ENCODE measurements at regions of chr12 and their contacts with region 1.

Region 1: DNA sequence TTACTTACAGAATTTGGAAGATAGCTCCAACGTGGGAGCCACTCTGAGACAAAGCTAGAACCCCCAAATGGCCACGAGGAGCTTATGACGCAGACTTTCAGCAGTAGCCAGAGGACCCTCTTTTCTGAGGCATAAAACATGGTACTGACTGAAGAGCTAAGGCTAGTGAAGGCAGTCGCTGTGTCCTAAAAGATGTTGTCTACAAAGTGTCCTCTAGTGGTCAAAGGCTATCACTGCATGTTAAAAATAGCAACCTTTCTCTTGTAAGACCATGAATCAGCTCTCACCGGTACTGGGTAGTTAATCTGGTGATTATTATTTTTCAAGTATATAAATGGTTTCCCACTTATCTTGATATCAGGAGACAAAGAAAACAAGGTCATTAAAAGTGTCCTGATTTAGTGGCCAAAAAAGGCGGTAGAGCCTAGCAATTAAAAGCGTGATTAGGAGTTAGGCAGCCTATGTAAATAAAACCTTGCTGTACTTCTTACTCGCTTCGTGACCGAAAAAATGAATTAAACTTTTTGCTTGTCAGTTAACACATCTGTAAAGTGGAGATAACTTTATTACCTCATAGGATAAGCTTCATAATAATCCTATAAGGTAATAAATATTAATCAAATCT is 47.0 kb upstream of the LGR5 start:
- DNase-seq: no peak
- H3K4me3 ChIP-seq: no peak overlapping the region
- H3K27ac ChIP-seq: no peak overlapping the region
- H3K4me1 ChIP-seq: peaks cover 0 to 6% (median 0%) of the 10 kb centered on the region in 4 donors
- H3K27me3 ChIP-seq: no peaks in the 10 kb centered on the region
- CTCF ChIP-seq: peak; percentile 71 to 73

Region 2: DNA sequence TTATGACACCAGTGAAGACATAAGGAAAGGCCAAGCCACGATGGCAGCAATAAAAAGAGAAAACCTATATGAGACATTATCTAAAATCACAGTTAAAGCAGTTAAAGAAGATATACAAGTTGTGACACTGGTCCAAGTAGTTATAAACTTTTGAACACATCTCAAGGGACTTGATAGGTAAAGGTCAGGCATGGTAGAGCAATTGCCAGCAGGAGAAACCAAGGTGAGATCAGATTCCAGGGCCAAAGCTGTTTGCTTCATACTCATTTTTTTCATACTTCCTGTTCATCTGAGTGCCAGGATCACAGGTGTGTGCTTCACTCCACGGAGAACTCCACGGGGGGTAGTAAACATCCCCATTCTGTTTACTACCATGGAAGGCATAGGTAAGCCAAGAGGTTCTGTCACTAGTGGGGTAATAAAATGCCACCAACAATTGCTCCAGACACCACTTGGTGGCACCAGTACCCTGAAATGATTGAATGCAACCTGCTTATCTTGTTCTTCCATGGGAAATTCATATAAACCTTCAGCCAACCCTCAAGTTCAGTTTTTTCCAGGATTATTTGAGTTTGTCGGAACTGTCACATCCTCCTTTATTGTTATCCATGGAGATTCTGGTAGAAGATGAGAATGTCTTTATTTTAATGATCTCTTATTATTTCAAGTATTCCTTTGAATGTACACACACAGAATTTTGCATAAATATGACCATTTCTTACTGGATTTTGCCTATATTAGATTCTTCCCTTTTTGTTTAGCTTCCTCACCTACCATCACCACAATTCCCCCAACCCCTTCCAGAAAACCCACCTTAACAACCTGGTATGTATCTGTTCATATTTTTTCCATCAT is 175.7 kb before region 1 on chr12:
- intact Hi-C with region 1: loop called (anchors 10 kb)
- DNase-seq: peak in 1 of 2 donors; percentile 65
- H3K4me3 ChIP-seq: no peak overlapping the region
- H3K27ac ChIP-seq: peak overlapping the region in 1 of 2 donors; percentile 31
- H3K4me1 ChIP-seq: peaks cover 0 to 23% (median 1%) of the 10 kb centered on the region in 4 donors
- H3K27me3 ChIP-seq: no peaks in the 10 kb centered on the region
- CTCF ChIP-seq: peak; percentile 54 to 60

Measured in tibial artery (tissue), 4 donors.